ENCODE measurements at regions of chr2 and their contacts with region 1.

Region 1: DNA sequence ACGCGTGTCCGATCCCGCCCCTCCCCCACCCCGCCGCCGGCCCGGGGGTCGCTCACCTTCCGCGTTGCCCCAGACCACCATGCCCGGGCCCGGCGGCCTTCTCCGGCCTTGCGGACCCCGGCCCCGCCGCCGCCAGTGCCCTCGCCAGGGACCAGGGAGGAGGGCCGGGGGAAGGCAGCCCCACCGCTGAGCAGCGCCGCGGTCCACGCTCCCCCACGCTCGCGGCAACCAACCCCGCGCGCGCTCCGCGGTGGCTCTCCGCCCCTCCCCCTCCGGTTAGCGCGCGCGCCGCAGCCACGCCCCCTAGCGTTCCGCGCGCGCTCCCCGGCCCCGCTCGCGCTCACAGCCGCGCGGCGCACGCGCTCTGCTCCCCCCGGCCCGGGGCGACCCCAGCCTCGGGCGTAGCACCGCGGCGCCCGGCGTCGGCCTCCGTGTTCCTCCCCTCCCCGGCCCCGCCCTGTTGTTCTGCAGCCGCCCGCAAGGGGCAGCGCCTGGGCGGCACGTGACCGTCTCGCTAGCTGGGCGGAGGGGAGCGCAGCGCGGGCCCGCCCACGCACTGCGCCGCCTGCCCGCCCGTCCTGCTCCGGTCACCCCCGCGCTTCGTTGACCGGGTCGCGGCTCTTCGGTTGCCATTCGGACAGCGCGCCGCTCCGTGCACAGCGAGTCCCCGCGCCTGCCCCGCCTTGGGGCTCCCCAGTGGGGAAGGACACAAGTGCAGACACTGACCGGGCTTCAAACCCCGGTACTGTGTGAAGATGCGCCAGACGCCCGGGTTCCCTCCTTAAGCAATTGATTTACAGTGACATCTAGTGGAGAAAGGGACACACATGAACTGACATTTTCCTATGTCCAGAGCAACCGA is at the start of gene REV1:
- DNase-seq: peak; percentile 86 to 98 (median 93)
- ATAC-seq: peak; percentile 84
- H3K4me3 ChIP-seq: peak within 1 kb of the TSS; percentile 92
- H3K4me3 Mint-ChIP-seq: peak within 1 kb of the TSS; percentile 99
- H3K27ac ChIP-seq: peak within 1 kb of the TSS; percentile 79 to 81
- H3K27ac Mint-ChIP-seq: peak within 1 kb of the TSS; percentile 94
- H3K4me1 ChIP-seq: peaks cover 30% of the 10 kb centered on the region
- H3K4me1 Mint-ChIP-seq: peaks cover 39% of the 10 kb centered on the region
- H3K27me3 ChIP-seq: no peaks in the 10 kb centered on the region
- H3K27me3 Mint-ChIP-seq: no peaks in the 10 kb centered on the region
- CTCF ChIP-seq: peak; percentile 80
- total RNA-seq, gene REV1: 39.8 TPM

Region 2: GRCh38 chr2:97645695-97646629 is 1844.0 kb before region 1 on chr2 and contains the start of gene COX5B:
- CTCF ChIA-PET with region 1: no interaction called
- POLR2A ChIA-PET with region 1: no interaction called
- intact Hi-C with region 1: loop called in 1 of 2 experiments (anchors 5 kb)
- DNase-seq: peak; percentile 96 to 99 (median 98)
- ATAC-seq: peak; percentile 96
- H3K4me3 ChIP-seq: peak within 1 kb of the TSS; percentile 97
- H3K4me3 Mint-ChIP-seq: peak within 1 kb of the TSS; percentile 97
- H3K27ac ChIP-seq: peak within 1 kb of the TSS; percentile 84 to 89
- H3K27ac Mint-ChIP-seq: peak within 1 kb of the TSS; percentile 93
- H3K4me1 ChIP-seq: peaks cover 18% of the 10 kb centered on the region
- H3K4me1 Mint-ChIP-seq: peaks cover 31% of the 10 kb centered on the region
- H3K27me3 ChIP-seq: no peaks in the 10 kb centered on the region
- H3K27me3 Mint-ChIP-seq: no peaks in the 10 kb centered on the region
- CTCF ChIP-seq: no peak
- total RNA-seq, gene COX5B: 112 to 121 TPM

Region 3: GRCh38 chr2:98608116-98608999 is 881.6 kb before region 1 on chr2 and contains the starts of genes COA5 and UNC50:
- CTCF ChIA-PET with region 1: no interaction called
- POLR2A ChIA-PET with region 1: no interaction called
- intact Hi-C with region 1: loop called in 1 of 2 experiments (anchors 10 kb)
- DNase-seq: peak; percentile 84 to 95 (median 89)
- ATAC-seq: peak; percentile 83
- H3K4me3 ChIP-seq: peak within 1 kb of the TSS; percentile 77
- H3K4me3 Mint-ChIP-seq: peak within 1 kb of the TSS; percentile 85
- H3K27ac ChIP-seq: peak within 1 kb of the TSS; percentile 87 to 91
- H3K27ac Mint-ChIP-seq: peak within 1 kb of the TSS; percentile 89
- H3K4me1 ChIP-seq: peaks cover 43% of the 10 kb centered on the region
- H3K4me1 Mint-ChIP-seq: peaks cover 72% of the 10 kb centered on the region
- H3K27me3 ChIP-seq: no peaks in the 10 kb centered on the region
- H3K27me3 Mint-ChIP-seq: no peaks in the 10 kb centered on the region
- CTCF ChIP-seq: no peak
- total RNA-seq, gene COA5: 29.2 to 30.1 TPM
- total RNA-seq, gene UNC50: 17.1 to 17.5 TPM

Region 4: DNA sequence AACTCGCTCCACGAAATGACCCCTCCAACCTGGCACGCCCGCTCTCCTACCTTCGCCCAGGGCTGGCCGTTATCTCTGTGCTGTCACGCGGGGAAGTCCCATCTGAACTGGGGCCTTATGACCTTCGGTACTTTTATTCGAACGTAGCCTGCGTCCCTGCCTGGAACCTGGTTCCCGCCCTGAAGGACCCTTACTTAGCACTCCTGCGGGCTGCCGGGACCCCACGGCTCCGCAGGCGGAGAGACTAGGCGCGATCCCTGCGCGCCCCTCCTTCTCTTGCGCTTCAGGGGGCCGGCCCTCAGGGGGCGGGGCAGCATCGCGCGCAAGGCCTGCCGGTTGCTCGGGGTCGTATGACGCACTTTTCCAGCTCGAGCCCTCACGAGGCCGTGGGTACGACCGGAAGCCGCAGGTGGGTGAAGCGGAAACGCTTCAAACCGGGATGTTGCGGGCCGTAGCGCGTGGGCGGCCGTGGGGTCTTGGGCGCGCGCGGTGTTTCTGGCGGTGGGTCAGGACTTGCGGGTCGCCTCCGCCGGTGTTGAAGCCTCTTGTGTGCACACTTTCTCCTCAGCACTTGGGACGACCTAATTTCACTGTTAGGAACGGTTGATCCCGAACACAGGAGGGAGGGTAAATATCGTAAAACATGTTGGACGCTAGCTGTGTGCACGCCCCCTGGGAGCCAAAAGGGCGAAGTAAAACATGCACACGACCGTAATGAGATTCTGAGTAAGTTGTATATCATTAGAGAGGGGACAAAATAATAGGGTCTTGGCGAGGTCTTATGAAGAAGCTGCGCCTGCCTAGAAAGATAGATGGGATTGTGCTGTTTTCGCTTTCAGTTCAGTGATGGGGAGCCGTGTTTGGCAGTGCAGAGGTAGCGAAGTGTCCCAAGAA is 335.1 kb before region 1 on chr2 and contains the starts of genes LIPT1 and TSGA10:
- CTCF ChIA-PET with region 1: interaction called, 3 read pairs
- POLR2A ChIA-PET with region 1: interaction called, 11 read pairs
- intact Hi-C with region 1: loop called (anchors 5 kb)
- DNase-seq: peak; percentile 81 to 97 (median 89)
- ATAC-seq: peak; percentile 93
- H3K4me3 ChIP-seq: peak within 1 kb of the TSS; percentile 69
- H3K4me3 Mint-ChIP-seq: no peak within 1 kb of the TSS
- H3K27ac ChIP-seq: peak within 1 kb of the TSS; percentile 93 to 95
- H3K27ac Mint-ChIP-seq: no peak within 1 kb of the TSS
- H3K4me1 ChIP-seq: peaks cover 21% of the 10 kb centered on the region
- H3K4me1 Mint-ChIP-seq: peaks cover 43% of the 10 kb centered on the region
- H3K27me3 ChIP-seq: no peaks in the 10 kb centered on the region
- H3K27me3 Mint-ChIP-seq: no peaks in the 10 kb centered on the region
- CTCF ChIP-seq: no peak
- total RNA-seq, gene LIPT1: 12.5 to 13.3 TPM
- total RNA-seq, gene TSGA10: 10.6 to 11.0 TPM

Region 5: GRCh38 chr2:99337113-99338028 is 152.6 kb before region 1 on chr2 and contains the start of gene EIF5B:
- CTCF ChIA-PET with region 1: interaction called, 11 read pairs
- POLR2A ChIA-PET with region 1: interaction called, 33 read pairs
- intact Hi-C with region 1: loop called (anchors 1 kb)
- DNase-seq: peak; percentile 82 to 97 (median 93)
- ATAC-seq: peak; percentile 58
- H3K4me3 ChIP-seq: peak within 1 kb of the TSS; percentile 89
- H3K4me3 Mint-ChIP-seq: no peak within 1 kb of the TSS
- H3K27ac ChIP-seq: peak within 1 kb of the TSS; percentile 72 to 79
- H3K27ac Mint-ChIP-seq: no peak within 1 kb of the TSS
- H3K4me1 ChIP-seq: peaks cover 29% of the 10 kb centered on the region
- H3K4me1 Mint-ChIP-seq: peaks cover 40% of the 10 kb centered on the region
- H3K27me3 ChIP-seq: no peaks in the 10 kb centered on the region
- H3K27me3 Mint-ChIP-seq: no peaks in the 10 kb centered on the region
- CTCF ChIP-seq: peak; percentile 74
- total RNA-seq, gene EIF5B: 27.8 to 33.2 TPM

Region 6: DNA sequence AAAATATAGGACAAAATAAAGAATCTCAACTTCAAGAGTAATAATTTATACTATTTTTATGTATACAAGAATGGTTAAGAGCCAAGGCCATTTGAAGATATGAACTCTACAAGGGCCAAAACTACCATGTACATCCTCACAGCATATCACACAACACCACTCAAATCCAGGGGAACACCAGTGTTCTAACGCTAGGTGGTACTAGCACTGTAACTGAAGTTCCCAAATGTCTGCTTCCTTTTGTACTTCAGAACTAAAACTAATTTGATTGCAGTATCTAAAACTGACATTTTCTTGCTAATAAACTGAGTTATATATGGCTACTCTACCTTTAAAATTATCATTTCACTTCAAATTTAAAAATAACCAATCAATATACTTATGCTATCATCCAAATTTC is 47.2 kb before region 1 on chr2:
- CTCF ChIA-PET with region 1: interaction called, 3 read pairs
- POLR2A ChIA-PET with region 1: interaction called, 3 read pairs
- intact Hi-C with region 1: loop called (anchors 2 to 5 kb)
- DNase-seq: peak in 3 of 14 experiments; percentile 4 to 13 (median 9)
- ATAC-seq: no peak
- H3K4me3 ChIP-seq: no peak overlapping the region
- H3K4me3 Mint-ChIP-seq: no peak overlapping the region
- H3K27ac ChIP-seq: no peak overlapping the region
- H3K27ac Mint-ChIP-seq: no peak overlapping the region
- H3K4me1 ChIP-seq: no peaks in the 10 kb centered on the region
- H3K4me1 Mint-ChIP-seq: peaks cover 21% of the 10 kb centered on the region
- H3K27me3 ChIP-seq: no peaks in the 10 kb centered on the region
- H3K27me3 Mint-ChIP-seq: no peaks in the 10 kb centered on the region
- CTCF ChIP-seq: no peak

Measured in CD4-positive, alpha-beta T cell (primary cell).